Dorsolateral prefrontal cortex (tissue), 120 donors: ENCODE measurements at regions of chr4 and their contacts with region 1.

Region 1: GRCh38 chr4:48779998-48780742 is at the start of gene FRYL:
- DNase-seq: peak; percentile 98 to 100 (median 100)
- H3K4me3 ChIP-seq: peak within 1 kb of the TSS; percentile 62 to 98 (median 93)
- H3K27ac ChIP-seq: peak within 1 kb of the TSS; percentile 74 to 99 (median 96)
- H3K27me3 ChIP-seq: no peaks in the 10 kb centered on the region
- CTCF ChIP-seq: peak in 6 of 56 donors; percentile 1 to 28 (median 6)
- total RNA-seq, gene FRYL: 57.6 to 345 (median 151) TPM

Region 2: GRCh38 chr4:48578132-48578968 is 201.8 kb before region 1 on chr4:
- intact Hi-C with region 1: loop called (anchors 5 kb)
- DNase-seq: peak in 7 of 10 donors; percentile 36 to 74 (median 53)
- H3K4me3 ChIP-seq: no peak overlapping the region
- H3K27ac ChIP-seq: peak overlapping the region in 31 of 59 donors; percentile 7 to 71 (median 46)
- H3K27me3 ChIP-seq: no peaks in the 10 kb centered on the region
- CTCF ChIP-seq: peak; percentile 84 to 99 (median 93)

Region 3: DNA sequence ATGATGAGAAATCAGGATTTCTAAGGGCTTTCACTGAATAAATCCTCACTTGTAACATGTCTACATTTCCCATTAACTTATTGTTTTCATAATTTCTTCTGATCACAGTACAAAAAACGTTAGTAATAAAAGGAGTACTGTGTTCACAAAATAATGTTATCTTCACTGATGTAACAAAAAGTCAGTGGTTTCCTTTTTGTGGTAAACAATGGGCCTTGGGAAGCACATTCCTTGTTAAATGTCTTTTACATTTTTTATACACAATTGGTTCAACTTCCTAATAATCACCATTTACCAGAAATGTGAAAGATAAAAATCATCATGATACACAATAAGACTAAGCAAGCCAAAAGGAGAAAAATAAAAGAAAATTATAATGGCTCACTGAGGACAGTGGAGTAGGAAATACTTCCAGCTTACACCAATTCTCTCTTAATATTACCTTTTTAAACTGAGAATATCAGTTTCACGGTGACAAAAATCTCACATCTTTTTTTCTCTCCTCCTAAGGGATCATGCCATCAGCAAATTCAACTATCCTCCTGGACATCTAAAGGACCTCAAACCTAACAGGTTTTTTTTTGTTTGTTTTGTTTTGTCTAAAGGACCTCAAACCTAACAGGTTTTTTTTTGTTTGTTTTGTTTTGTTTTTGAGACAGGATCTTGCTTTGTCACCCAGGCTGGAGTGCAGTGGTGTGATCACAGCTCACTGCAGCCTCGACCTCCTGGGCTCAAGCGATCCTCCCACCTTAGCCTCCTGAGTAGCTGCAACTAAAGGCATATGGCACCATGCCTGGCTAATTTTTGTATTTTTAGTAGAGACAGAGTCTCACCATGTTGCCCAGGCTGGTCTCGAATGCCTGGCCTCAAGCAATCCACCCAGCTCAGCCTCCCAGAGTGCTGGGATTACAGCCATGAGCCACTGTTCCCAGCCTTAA is 57.4 kb before region 1 on chr4:
- intact Hi-C with region 1: loop called in 1 of 2 experiments (anchors 10 kb)
- DNase-seq: no peak
- H3K4me3 ChIP-seq: peak overlapping the region in 4 of 59 donors; percentile 5 to 13 (median 8)
- H3K27ac ChIP-seq: peak overlapping the region in 55 of 59 donors; percentile 5 to 93 (median 69)
- H3K27me3 ChIP-seq: no peaks in the 10 kb centered on the region
- CTCF ChIP-seq: no peak

Region 4: GRCh38 chr4:48739560-48740019 is 40.6 kb before region 1 on chr4:
- intact Hi-C with region 1: no loop called
- DNase-seq: no peak
- H3K4me3 ChIP-seq: no peak overlapping the region
- H3K27ac ChIP-seq: no peak overlapping the region
- H3K27me3 ChIP-seq: no peaks in the 10 kb centered on the region
- CTCF ChIP-seq: no peak

Region 5: DNA sequence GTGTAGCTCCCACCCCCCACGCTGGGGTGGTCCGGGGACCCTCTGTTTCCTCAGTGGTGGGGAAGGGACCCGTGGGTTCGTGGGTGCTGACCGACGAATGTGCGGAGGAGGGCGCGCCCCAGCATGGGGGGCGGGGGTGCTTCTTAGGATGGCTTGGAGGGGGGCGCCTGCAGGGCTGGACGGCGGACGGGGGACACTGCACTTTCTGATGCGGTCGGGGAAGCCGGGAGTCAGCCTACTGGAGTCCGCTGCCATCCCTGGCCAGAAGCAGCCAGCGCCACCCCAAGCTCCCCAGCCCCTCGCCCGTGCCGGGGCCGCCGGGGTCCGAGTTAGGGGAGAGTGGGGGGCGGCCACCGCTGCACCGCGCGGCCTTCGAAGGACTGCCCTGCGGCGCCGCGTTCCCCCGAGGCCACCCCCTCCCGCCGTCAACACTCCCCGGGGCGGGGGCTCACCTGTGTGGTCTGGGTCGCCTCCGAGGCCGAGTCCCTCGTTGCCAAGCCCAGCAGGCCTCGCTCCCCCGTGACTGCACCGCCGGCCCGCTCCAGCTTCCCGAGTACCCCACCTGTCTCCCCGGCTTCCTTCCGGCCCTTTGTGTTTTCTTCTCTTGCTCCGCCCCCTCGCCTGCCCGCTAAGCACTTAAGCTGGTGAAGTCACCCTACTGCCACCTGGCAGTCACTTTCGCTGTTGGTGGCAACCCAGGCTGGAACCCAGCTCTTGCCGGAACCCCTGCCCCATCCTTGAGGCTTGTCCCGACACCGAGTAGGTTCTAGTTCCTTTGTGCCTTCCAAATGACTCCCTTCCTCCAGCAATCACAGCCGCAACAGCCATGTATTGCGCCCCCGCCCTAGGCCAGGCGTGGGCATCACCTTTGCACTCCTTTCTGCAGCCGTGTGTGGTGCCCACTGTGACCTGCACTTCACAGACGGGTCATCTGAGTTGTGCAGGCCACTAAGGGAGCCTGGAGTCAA is 126.3 kb after region 1 on chr4 and contains the start of gene OCIAD2:
- intact Hi-C with region 1: loop called in 1 of 2 experiments (anchors 10 kb)
- DNase-seq: peak in 8 of 10 donors; percentile 45 to 75 (median 62)
- H3K4me3 ChIP-seq: peak within 1 kb of the TSS; percentile 51 to 84 (median 72)
- H3K27ac ChIP-seq: peak within 1 kb of the TSS in 19 of 59 donors; percentile 1 to 74 (median 51)
- H3K27me3 ChIP-seq: no peaks in the 10 kb centered on the region
- CTCF ChIP-seq: peak in 9 of 56 donors; percentile 7 to 36 (median 14)
- total RNA-seq, gene OCIAD2: 7.5 to 56.8 (median 27.8) TPM

Region 6: GRCh38 chr4:48924416-48924815 is 144.2 kb after region 1 on chr4:
- intact Hi-C with region 1: no loop called
- DNase-seq: no peak
- H3K4me3 ChIP-seq: no peak overlapping the region
- H3K27ac ChIP-seq: no peak overlapping the region
- H3K27me3 ChIP-seq: no peaks in the 10 kb centered on the region
- CTCF ChIP-seq: no peak